ENCODE measurements at regions of chr16 and their contacts with region 1.

Region 1: GRCh38 chr16:58336332-58337089 is 41.7 kb upstream of the PRSS54 start:
- DNase-seq: peak; percentile 21
- H3K4me3 ChIP-seq: peak overlapping the region in 2 of 3 experiments; percentile 38 to 40
- H3K27ac ChIP-seq: no peak overlapping the region
- H3K4me1 ChIP-seq: peaks cover 6% of the 10 kb centered on the region
- H3K27me3 ChIP-seq: no peaks in the 10 kb centered on the region
- CTCF ChIP-seq: peak; percentile 86 to 97 (median 94)

Region 2: GRCh38 chr16:58222532-58223316 is 113.8 kb before region 1 on chr16:
- dilution Hi-C with region 1: no loop called
- DNase-seq: peak; percentile 23
- H3K4me3 ChIP-seq: no peak overlapping the region
- H3K27ac ChIP-seq: no peak overlapping the region
- H3K4me1 ChIP-seq: peaks cover 11% of the 10 kb centered on the region
- H3K27me3 ChIP-seq: peaks cover 6% of the 10 kb centered on the region
- CTCF ChIP-seq: no peak

Region 3: DNA sequence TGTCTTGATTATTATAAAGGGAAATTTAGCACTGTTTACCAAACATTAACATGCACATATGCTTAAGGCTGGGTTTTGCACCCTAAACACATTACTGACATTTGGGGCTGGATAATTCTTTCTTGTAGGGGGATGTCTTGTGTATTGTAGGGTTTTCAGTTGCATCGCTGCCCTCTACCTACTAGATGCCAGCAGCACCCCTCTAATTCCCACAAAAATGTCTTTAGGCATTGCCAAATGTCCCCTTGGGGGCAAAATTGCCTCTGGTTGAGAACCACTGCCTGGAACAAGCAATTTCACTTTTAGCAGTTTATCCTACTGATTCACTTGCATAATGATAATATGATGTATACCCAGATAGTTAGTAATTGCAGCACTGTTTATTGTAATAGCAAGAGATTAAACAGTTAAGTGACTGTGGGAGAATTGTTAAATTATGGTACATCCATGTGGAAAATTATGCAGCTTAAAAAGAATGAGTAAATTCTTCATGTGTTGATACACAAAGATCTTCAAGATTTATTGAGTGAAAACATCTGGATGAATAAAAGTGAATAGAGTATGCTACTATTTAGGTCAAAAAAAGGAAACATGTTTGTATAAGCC is 60.1 kb before region 1 on chr16:
- dilution Hi-C with region 1: no loop called
- DNase-seq: no peak
- H3K4me3 ChIP-seq: no peak overlapping the region
- H3K27ac ChIP-seq: no peak overlapping the region
- H3K4me1 ChIP-seq: peaks cover 21% of the 10 kb centered on the region
- H3K27me3 ChIP-seq: no peaks in the 10 kb centered on the region
- CTCF ChIP-seq: no peak

Region 4: DNA sequence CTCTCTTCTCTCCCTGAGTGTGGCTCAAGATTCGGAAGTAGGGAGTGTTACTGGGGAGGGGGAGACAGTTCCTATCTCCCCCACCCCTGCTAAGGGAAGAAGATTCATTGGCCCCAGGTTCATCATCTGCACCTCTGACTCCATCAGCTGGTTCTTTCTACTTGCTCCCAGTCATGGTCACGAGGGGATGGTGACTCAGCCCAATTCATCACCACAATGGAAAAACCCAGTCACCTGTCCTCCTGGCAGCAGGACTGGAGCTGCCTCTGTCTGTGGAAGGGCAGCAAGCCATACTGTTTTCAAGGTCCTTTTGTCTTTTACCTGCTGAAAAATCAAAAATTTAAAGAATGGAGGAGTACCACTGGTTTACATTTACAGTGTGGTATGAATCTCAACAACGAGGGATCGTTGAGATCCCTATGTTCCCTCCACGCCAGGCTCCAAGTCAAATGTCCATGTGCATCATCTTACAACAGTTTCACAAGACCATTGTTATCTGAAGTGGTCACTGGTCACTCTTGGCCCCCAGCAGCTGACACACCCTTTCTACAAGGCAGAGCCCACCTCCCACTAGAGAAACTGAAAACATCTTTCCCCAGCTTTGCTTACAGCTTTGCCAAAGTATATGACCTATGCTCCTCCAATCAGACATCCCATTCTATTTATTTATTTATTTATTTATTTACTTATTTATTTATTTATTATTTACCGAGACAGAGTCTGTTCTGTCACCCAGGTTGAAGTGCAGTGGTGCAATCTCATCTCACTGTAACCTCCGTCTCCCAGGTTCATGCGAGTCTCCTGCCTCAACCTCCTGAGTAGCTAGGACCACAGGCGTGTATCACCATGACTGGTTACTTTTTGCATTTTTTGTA is 123.1 kb after region 1 on chr16:
- dilution Hi-C with region 1: loop called (anchors 10 kb)
- DNase-seq: peak; percentile 63
- H3K4me3 ChIP-seq: no peak overlapping the region
- H3K27ac ChIP-seq: no peak overlapping the region
- H3K4me1 ChIP-seq: peaks cover 5% of the 10 kb centered on the region
- H3K27me3 ChIP-seq: peaks cover 20% of the 10 kb centered on the region
- CTCF ChIP-seq: no peak